IMR-90 (cell line): ENCODE measurements at regions of chr4 and their contacts with region 1.

Region 1: DNA sequence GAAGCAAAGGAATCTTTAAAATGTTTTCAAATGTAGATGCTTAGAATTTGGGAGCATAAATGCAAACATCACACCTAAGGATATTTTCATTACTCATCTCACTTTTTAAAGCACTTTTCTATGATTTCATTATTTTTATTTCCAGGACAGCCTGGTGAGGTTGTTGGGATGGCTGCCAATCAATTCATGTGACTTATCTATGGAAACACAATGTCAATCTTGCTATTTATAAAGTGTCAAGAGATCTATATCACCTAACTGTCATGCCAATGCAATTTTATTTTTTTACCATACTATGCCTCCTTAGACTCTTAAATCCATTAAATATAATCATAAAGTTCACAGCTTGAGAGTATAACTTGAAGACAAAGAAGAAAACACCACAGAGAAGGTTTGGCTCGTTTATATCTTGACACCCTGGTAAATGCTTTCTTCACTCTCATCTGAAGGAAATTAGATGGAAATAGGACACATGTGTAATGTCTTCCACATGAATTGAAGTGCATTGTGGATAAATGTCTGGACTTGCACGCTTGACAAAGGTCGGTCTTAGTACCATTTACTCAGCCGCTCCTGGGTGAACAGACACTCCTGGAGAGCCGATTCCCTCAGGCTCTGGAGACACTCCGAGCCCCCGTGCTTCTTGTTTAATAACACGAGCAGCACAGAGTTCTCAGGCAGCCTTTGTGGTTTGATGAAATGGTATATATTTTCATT is 425.7 kb upstream of the FAT1 start:
- DNase-seq: no peak
- ATAC-seq: no peak
- H3K4me3 ChIP-seq: no peak overlapping the region
- H3K27ac ChIP-seq: no peak overlapping the region
- H3K4me1 ChIP-seq: no peaks in the 10 kb centered on the region
- H3K27me3 ChIP-seq: no peaks in the 10 kb centered on the region
- CTCF ChIP-seq: no peak
- POLR2A ChIP-seq: no peak
- RAD21 ChIP-seq: no peak

Region 2: DNA sequence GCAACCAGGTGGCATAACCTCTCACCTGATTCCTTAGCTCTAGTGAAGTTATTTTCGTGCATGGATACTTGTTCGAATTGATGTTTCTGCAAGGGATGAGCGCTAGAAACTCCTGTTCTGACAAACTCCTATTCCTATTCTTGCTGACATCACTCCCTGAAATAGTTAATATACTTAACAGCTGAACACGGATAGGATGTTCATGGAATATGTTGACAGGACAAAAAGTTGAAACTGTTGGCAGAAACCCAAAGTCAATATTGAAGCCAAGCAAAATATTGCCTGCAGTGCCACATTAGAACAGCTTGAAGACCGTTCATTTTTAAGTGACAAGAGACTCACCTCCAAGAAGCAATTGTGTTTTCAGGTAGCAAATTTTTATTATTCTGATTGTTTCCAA is 922.2 kb before region 1 on chr4 and contains the start of gene KLKB1:
- CTCF ChIA-PET with region 1: no interaction called
- POLR2A ChIA-PET with region 1: no interaction called
- dilution Hi-C with region 1: no loop called
- in situ Hi-C with region 1: no loop called
- intact Hi-C with region 1: no loop called
- DNase-seq: no peak
- ATAC-seq: no peak
- H3K4me3 ChIP-seq: no peak within 1 kb of the TSS
- H3K27ac ChIP-seq: no peak within 1 kb of the TSS
- H3K4me1 ChIP-seq: no peaks in the 10 kb centered on the region
- H3K27me3 ChIP-seq: no peaks in the 10 kb centered on the region
- CTCF ChIP-seq: no peak
- POLR2A ChIP-seq: no peak
- RAD21 ChIP-seq: no peak
- total RNA-seq, gene KLKB1: under 0.01 TPM in 1 of 2 replicates, not detected in the other

Region 3: GRCh38 chr4:187218705-187219245 is 69.4 kb after region 1 on chr4:
- CTCF ChIA-PET with region 1: no interaction called
- POLR2A ChIA-PET with region 1: no interaction called
- dilution Hi-C with region 1: no loop called
- in situ Hi-C with region 1: no loop called
- intact Hi-C with region 1: no loop called
- DNase-seq: peak; percentile 74
- ATAC-seq: peak; percentile 95
- H3K4me3 ChIP-seq: peak overlapping the region; percentile 5; the same call in 1 of the 2 replicates
- H3K27ac ChIP-seq: peak overlapping the region; percentile 74; the same call in 1 of the 2 replicates
- H3K4me1 ChIP-seq: peaks cover 2% of the 10 kb centered on the region
- H3K27me3 ChIP-seq: no peaks in the 10 kb centered on the region
- CTCF ChIP-seq: no peak
- POLR2A ChIP-seq: no peak
- RAD21 ChIP-seq: no peak

Region 4: DNA sequence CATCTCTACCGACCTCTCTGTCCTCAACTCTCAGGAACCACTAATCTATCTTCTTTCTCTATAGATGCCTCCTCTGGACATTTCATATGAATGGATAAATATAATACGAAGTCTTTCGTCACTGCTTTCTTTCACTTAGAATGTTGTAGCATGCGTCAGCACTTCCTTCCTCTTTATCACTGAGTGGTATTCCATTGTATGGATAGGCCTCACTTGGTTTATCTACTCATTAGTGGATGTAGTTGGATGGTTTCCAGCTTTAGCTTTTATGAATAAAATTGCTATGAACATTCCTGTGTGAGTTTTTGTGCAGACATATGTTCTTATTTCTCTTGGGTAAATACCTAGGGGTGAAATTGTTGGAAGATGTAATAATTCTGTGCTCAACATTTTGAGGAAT is 102.5 kb after region 1 on chr4:
- CTCF ChIA-PET with region 1: no interaction called
- POLR2A ChIA-PET with region 1: no interaction called
- dilution Hi-C with region 1: no loop called
- in situ Hi-C with region 1: no loop called
- intact Hi-C with region 1: loop called (anchors 5 kb)
- DNase-seq: peak; percentile 18
- ATAC-seq: no peak
- H3K4me3 ChIP-seq: no peak overlapping the region
- H3K27ac ChIP-seq: no peak overlapping the region
- H3K4me1 ChIP-seq: peaks cover 1% of the 10 kb centered on the region; the same call in 1 of the 2 replicates
- H3K27me3 ChIP-seq: no peaks in the 10 kb centered on the region
- CTCF ChIP-seq: no peak
- POLR2A ChIP-seq: no peak
- RAD21 ChIP-seq: no peak